PC-9 (cell line): ENCODE measurements at regions of chr5 and their contacts with region 1.

Region 1: DNA sequence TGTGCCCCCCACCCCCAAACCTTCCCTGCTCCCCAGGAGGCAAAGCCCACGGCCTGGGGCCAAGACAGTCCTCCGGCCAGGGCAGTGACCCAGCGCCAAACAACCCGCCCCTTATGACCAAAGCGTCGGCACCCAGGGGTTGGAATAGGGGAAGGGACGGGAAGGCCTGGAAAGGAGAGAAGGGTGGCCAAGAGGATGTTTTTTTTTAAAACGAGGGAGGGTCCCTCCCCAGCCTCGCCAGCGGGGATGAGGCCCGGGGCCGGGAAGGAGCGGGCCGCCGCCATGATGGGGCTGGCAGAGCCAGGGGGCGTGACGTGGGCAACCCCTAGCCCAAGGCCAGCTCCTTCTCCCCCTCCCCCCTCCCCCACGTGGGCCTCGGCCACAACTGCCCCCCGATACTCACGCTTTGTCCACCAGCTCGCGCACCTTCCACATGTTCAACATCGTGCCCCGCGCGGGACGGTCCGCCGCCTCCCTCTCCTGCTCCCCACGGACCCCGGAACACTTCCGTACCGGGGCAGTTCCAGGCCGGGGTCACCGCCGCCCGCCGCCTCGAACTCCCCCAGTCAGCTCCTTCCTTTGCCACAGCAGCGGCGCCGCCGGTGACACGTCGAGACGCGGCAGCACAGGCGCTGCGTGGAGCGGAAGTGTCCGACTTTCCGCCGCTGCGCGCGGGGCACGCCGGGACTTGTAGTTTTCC is at the start of gene CLINT1:
- DNase-seq: peak; percentile 74 to 88
- H3K4me3 ChIP-seq: peak within 1 kb of the TSS; percentile 95
- H3K27ac ChIP-seq: peak within 1 kb of the TSS; percentile 64
- H3K4me1 ChIP-seq: peaks cover 17% of the 10 kb centered on the region
- H3K27me3 ChIP-seq: no peaks in the 10 kb centered on the region
- CTCF ChIP-seq: no peak
- total RNA-seq, gene CLINT1: 79.7 and 95.8 TPM in 2 replicates

Region 2: GRCh38 chr5:157245477-157245876 is 613.2 kb before region 1 on chr5:
- CTCF ChIA-PET with region 1: no interaction called
- POLR2A ChIA-PET with region 1: interaction called, 20 read pairs
- intact Hi-C with region 1: no loop called
- DNase-seq: no peak
- H3K4me3 ChIP-seq: no peak overlapping the region
- H3K27ac ChIP-seq: no peak overlapping the region
- H3K4me1 ChIP-seq: no peaks in the 10 kb centered on the region
- H3K27me3 ChIP-seq: peaks cover 30% of the 10 kb centered on the region; the same call in 1 of the 2 replicates
- CTCF ChIP-seq: no peak

Region 3: DNA sequence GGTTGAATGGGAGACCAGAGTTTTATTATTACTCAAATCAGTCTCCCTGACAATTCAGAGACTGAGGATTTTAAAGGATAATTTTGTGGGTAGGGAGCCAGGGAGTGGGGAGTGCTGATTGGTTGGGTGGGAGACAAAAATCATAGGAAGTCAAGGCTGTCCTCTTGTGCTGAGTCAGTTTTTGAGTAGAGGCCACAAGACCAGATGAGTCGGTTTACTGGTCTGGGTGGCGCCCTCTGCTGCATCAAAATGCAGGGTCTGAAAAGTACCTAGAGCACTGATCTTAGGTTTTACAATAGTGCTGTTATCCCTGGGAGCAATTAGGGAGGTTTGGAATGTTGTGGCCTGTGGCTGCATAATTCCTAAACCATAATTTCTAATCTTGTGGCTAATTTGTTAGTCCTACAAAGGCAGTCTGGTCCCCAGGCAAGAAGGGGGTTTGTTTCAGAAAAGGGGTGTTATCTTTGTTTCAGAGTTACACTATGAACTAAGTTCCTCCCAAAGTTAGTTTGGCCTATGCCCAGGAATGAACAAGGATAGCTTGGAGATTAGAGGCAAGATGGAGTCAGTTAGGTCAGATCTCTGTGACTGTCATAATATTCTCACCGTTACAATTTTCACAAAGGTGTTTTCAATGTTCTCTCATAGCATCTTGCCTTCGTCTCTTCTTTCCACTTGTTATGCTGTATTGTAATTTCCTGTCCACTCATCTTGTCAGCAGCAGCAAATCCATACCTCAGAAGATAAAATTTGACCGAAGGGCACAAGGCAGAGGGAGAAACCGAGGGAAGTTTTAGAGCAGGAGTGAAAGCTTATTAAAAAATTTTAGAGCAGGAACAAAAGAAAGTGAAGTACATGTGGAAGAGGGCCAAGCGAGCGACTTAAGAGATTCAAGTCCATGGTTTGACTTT is 59.5 kb after region 1 on chr5:
- CTCF ChIA-PET with region 1: no interaction called
- POLR2A ChIA-PET with region 1: no interaction called
- intact Hi-C with region 1: loop called (anchors 2 kb)
- DNase-seq: peak; percentile 29 to 64
- H3K4me3 ChIP-seq: no peak overlapping the region
- H3K27ac ChIP-seq: peak overlapping the region; percentile 28; the same call in 1 of the 2 replicates
- H3K4me1 ChIP-seq: peaks cover 22% of the 10 kb centered on the region
- H3K27me3 ChIP-seq: no peaks in the 10 kb centered on the region
- CTCF ChIP-seq: peak; percentile 64